A673 (cell line): ENCODE measurements at regions of chr11 and their contacts with region 1.

Region 1: GRCh38 chr11:33742249-33742851 is 6.1 kb upstream of the CD59 start:
- DNase-seq: peak; percentile 62
- H3K4me3 ChIP-seq: no peak overlapping the region
- H3K27ac ChIP-seq: no peak overlapping the region
- H3K4me1 ChIP-seq: no peaks in the 10 kb centered on the region
- H3K27me3 ChIP-seq: no peaks in the 10 kb centered on the region
- CTCF ChIP-seq: peak; percentile 87

Region 2: GRCh38 chr11:33542921-33543320 is 199.4 kb before region 1 on chr11:
- CTCF ChIA-PET with region 1: interaction called, 24 read pairs
- POLR2A ChIA-PET with region 1: no interaction called
- intact Hi-C with region 1: loop called (anchors 2 kb)
- DNase-seq: peak; percentile 80
- H3K4me3 ChIP-seq: no peak overlapping the region
- H3K27ac ChIP-seq: no peak overlapping the region
- H3K4me1 ChIP-seq: no peaks in the 10 kb centered on the region
- H3K27me3 ChIP-seq: peaks cover 43% of the 10 kb centered on the region
- CTCF ChIP-seq: peak; percentile 94

Region 3: GRCh38 chr11:33700425-33701271 is 41.7 kb before region 1 on chr11 and contains the start of gene C11orf91:
- CTCF ChIA-PET with region 1: interaction called, 24 read pairs
- POLR2A ChIA-PET with region 1: no interaction called
- intact Hi-C with region 1: no loop called
- DNase-seq: peak; percentile 100
- H3K4me3 ChIP-seq: peak within 1 kb of the TSS; percentile 42
- H3K27ac ChIP-seq: peak within 1 kb of the TSS; percentile 74
- H3K4me1 ChIP-seq: peaks cover 40% of the 10 kb centered on the region
- H3K27me3 ChIP-seq: no peaks in the 10 kb centered on the region
- CTCF ChIP-seq: no peak
- total RNA-seq, gene C11orf91: not detected in 2 replicates

Region 4: DNA sequence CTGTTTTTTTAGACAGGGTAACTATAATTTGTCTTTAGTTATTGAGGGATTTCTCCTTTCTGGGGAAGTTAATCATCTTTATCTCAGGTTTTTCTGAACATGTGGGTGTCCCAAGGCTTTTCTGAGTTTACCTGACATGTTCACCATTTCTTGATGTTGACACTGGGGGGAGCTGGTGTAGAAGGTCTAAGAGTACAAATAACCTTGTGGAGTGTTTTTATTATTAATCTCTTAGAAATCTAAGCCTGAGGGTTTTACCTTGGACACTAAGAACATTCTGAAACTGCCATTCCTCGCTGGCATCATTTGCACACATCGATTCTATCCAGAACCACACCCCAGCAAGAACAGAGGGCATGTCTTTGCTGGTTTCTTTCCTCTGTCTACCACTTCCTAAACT is 26.1 kb before region 1 on chr11:
- CTCF ChIA-PET with region 1: interaction called, 32 read pairs
- POLR2A ChIA-PET with region 1: no interaction called
- intact Hi-C with region 1: no loop called
- DNase-seq: peak; percentile 70
- H3K4me3 ChIP-seq: no peak overlapping the region
- H3K27ac ChIP-seq: no peak overlapping the region
- H3K4me1 ChIP-seq: peaks cover 9% of the 10 kb centered on the region
- H3K27me3 ChIP-seq: no peaks in the 10 kb centered on the region
- CTCF ChIP-seq: peak; percentile 71

Region 5: GRCh38 chr11:35165423-35166368 is 1423.3 kb after region 1 on chr11:
- CTCF ChIA-PET with region 1: no interaction called
- POLR2A ChIA-PET with region 1: no interaction called
- intact Hi-C with region 1: no loop called
- DNase-seq: no peak
- H3K4me3 ChIP-seq: no peak overlapping the region
- H3K27ac ChIP-seq: no peak overlapping the region
- H3K4me1 ChIP-seq: no peaks in the 10 kb centered on the region
- H3K27me3 ChIP-seq: peaks cover 3% of the 10 kb centered on the region
- CTCF ChIP-seq: no peak